Activated T-helper 1 cell treated with anti-CD3 and anti-CD28 coated beads, Interleukin-12 subunit alpha, Interleukin-12 subunit beta, Interleukin-2, Interleukin-4 antibody, amounts not matched to agents 30 ng/mL and 10 ng/mL and 1 ng/mL, durations not matched to agents 14 hours and 24 hours and 36 hours (primary cell): ENCODE measurements at regions of chr1 and their contacts with region 1.

Region 1: GRCh38 chr1:236394905-236395780 is 1.1 kb downstream of the EDARADD start:
- DNase-seq: peak; percentile 39
- H3K4me3 Mint-ChIP-seq: peak overlapping the region; percentile 90
- H3K27ac Mint-ChIP-seq: peak overlapping the region; percentile 87
- H3K4me1 Mint-ChIP-seq: peaks cover 52% of the 10 kb centered on the region
- H3K27me3 Mint-ChIP-seq: peaks cover 17% of the 10 kb centered on the region

Region 2: GRCh38 chr1:235648954-235649367 is 746.2 kb before region 1 on chr1:
- intact Hi-C with region 1: loop called (anchors 10 kb)
- DNase-seq: peak; percentile 57
- H3K4me3 Mint-ChIP-seq: peak overlapping the region; percentile 95
- H3K27ac Mint-ChIP-seq: peak overlapping the region; percentile 89
- H3K4me1 Mint-ChIP-seq: peaks cover 44% of the 10 kb centered on the region
- H3K27me3 Mint-ChIP-seq: peaks cover 62% of the 10 kb centered on the region

Region 3: DNA sequence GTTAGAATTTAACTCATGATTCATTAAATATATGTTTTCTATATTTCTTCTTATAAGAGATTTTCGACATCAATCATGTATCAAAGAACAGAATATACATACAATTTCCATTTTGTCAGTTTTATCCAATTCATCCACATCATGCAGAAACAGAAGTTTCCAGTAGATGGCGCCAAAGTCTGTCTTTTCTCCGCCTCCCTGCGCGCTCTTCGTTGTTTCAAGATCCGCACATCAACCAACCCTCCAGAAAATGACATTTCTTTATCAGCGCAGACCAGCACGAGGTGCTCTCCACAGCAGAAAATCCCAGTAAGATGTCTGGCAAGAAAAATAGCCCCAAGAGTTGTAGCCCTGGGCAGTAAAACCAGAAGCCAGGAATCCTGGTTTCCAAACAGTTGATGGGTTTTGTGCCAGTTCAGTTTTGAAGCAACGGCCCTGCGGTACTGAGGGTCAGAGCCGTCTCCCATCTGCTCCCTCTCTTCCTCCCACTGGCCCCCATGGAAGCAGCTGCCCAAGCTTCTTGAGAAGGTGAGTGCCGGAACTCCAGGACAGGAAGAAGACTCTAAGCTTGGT is 291.4 kb before region 1 on chr1:
- intact Hi-C with region 1: loop called (anchors 2 kb)
- DNase-seq: peak; percentile 38
- H3K4me3 Mint-ChIP-seq: no peak overlapping the region
- H3K27ac Mint-ChIP-seq: no peak overlapping the region
- H3K4me1 Mint-ChIP-seq: peaks cover 6% of the 10 kb centered on the region
- H3K27me3 Mint-ChIP-seq: peaks cover 3% of the 10 kb centered on the region

Region 4: DNA sequence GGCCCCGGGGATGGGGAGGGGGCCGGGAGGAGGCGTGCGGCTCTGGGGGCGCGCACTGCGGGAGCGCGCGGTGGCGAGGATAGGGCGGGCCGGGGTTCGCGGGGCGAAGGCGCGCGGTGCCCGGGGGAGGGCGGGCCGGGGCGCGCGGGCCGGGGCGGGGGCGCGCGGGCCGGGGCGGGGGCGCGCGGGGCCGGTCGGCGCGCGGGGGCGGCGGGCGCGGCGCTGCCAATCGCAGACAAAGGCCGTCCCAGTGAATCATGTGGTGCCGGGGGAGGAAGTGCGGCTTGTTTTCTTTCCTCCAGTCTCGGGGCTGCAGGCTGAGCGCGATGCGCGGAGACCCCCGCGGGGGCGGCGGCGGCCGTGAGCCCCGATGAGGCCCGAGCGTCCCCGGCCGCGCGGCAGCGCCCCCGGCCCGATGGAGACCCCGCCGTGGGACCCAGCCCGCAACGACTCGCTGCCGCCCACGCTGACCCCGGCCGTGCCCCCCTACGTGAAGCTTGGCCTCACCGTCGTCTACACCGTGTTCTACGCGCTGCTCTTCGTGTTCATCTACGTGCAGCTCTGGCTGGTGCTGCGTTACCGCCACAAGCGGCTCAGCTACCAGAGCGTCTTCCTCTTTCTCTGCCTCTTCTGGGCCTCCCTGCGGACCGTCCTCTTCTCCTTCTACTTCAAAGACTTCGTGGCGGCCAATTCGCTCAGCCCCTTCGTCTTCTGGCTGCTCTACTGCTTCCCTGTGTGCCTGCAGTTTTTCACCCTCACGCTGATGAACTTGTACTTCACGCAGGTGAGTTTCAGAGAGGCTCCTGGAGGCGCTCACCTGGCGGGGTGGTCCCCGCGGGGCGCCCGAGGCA is 252.7 kb before region 1 on chr1 and contains the start of gene GPR137B:
- intact Hi-C with region 1: loop called (anchors 1 kb)
- DNase-seq: peak; percentile 39
- H3K4me3 Mint-ChIP-seq: peak within 1 kb of the TSS; percentile 91
- H3K27ac Mint-ChIP-seq: peak within 1 kb of the TSS; percentile 93
- H3K4me1 Mint-ChIP-seq: peaks cover 25% of the 10 kb centered on the region
- H3K27me3 Mint-ChIP-seq: peaks cover 42% of the 10 kb centered on the region
- total RNA-seq, gene GPR137B: 9.2 and 10.5 TPM in 2 replicates

Region 5: DNA sequence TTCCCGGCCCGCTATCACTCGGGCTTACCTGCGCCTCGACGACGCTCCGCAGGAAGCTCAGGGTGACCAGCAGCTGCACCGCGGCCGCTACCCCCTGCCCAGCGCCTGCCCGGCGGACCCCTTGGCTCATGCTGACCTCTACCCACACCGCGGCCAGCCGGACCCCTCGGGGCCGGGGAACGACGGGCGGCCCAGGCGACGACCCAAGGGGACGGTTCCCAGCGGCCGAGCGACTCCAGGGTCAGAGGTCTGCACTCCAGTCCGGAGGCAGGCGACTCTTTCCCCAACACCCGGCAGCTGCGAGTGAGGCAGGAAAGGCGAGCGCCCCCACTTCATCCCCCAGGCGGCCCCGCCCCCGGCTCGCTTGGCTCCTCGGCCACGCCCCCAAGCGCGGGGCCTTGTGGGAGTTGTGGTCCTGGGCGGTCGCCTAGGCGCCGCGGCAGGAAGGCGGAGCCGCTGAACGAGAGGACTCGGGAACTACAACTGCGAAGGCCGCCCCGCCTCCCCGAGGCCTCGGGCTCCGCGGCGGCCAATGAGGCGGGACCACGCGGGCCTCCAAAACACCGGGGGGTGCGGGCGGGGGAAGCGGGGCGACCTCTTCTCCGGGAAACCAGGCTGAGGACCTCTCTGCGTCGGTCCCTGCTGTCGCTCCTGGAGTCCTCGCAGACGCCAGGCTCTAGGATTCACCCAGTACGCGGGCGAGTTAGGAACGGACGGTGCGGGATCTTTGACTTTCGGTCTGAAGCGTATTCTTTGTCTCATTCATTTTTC is 113.3 kb before region 1 on chr1 and contains the start of gene ERO1B:
- intact Hi-C with region 1: loop called (anchors 1 kb)
- DNase-seq: peak; percentile 98
- H3K4me3 Mint-ChIP-seq: peak within 1 kb of the TSS; percentile 90
- H3K27ac Mint-ChIP-seq: peak within 1 kb of the TSS; percentile 80
- H3K4me1 Mint-ChIP-seq: peaks cover 45% of the 10 kb centered on the region
- H3K27me3 Mint-ChIP-seq: peaks cover 12% of the 10 kb centered on the region
- total RNA-seq, gene ERO1B: 2.1 and 2.4 TPM in 2 replicates

Region 6: GRCh38 chr1:236489710-236490377 is 94.7 kb after region 1 on chr1:
- intact Hi-C with region 1: loop called (anchors 2 kb)
- DNase-seq: no peak
- H3K4me3 Mint-ChIP-seq: no peak overlapping the region
- H3K27ac Mint-ChIP-seq: no peak overlapping the region
- H3K4me1 Mint-ChIP-seq: peaks cover 14% of the 10 kb centered on the region
- H3K27me3 Mint-ChIP-seq: peaks cover 5% of the 10 kb centered on the region

Region 7: GRCh38 chr1:236603991-236604904 is 209.1 kb after region 1 on chr1 and contains the start of gene HEATR1:
- intact Hi-C with region 1: loop called (anchors 5 kb)
- DNase-seq: peak; percentile 85
- H3K4me3 Mint-ChIP-seq: peak within 1 kb of the TSS; percentile 98
- H3K27ac Mint-ChIP-seq: peak within 1 kb of the TSS; percentile 90
- H3K4me1 Mint-ChIP-seq: peaks cover 37% of the 10 kb centered on the region
- H3K27me3 Mint-ChIP-seq: peaks cover 8% of the 10 kb centered on the region
- total RNA-seq, gene HEATR1: 83.6 and 85.2 TPM in 2 replicates